Caco-2 (cell line): ENCODE measurements at regions of chr4 and their contacts with region 1.

Region 1: GRCh38 chr4:113761620-113762185 is at the start of gene CAMK2D:
- DNase-seq: peak; percentile 91 to 94
- H3K4me3 ChIP-seq: peak within 1 kb of the TSS; percentile 82
- H3K4me3 Mint-ChIP-seq: peak within 1 kb of the TSS; percentile 96
- H3K27ac Mint-ChIP-seq: peak within 1 kb of the TSS; percentile 91
- H3K4me1 ChIP-seq: peaks cover 37% of the 10 kb centered on the region
- H3K4me1 Mint-ChIP-seq: peaks cover 30% of the 10 kb centered on the region
- H3K27me3 ChIP-seq: no peaks in the 10 kb centered on the region
- H3K27me3 Mint-ChIP-seq: no peaks in the 10 kb centered on the region
- CTCF ChIP-seq: peak; percentile 35 to 82
- total RNA-seq, gene CAMK2D: 56.1 and 65.6 TPM in 2 replicates

Region 2: GRCh38 chr4:113468165-113469022 is 293.3 kb before region 1 on chr4:
- CTCF ChIA-PET with region 1: no interaction called
- POLR2A ChIA-PET with region 1: no interaction called
- intact Hi-C with region 1: loop called (anchors 5 kb)
- DNase-seq: peak; percentile 37 to 51
- H3K4me3 ChIP-seq: no peak overlapping the region
- H3K4me3 Mint-ChIP-seq: no peak overlapping the region
- H3K27ac Mint-ChIP-seq: peak overlapping the region; percentile 66
- H3K4me1 ChIP-seq: peaks cover 38% of the 10 kb centered on the region
- H3K4me1 Mint-ChIP-seq: peaks cover 33% of the 10 kb centered on the region
- H3K27me3 ChIP-seq: no peaks in the 10 kb centered on the region
- H3K27me3 Mint-ChIP-seq: no peaks in the 10 kb centered on the region
- CTCF ChIP-seq: no peak

Region 3: DNA sequence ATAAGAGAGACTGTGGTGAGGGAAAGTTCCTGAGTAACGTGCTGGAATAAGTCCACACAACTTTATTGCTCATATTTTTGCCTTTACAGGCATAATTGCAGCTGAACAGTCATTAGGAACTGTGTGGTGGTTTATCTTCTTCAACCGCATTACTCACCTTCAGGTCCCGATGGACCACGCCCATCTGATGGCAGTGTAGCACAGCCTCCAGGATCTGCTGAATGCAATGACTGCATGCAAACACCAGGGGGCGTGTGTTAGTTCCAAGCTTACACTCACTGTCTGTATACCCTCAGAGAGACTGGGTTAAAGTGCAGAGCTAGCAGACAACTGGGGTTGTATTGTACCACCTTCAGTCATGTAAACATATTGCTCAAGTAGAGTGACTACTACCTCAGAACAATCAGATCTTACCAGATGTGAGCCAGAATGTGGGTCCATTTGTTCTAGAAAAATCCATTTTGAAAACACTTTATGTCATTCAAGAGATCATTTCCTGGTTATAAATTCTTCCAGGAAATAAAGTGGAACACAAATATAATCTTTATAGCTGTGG is 214.1 kb before region 1 on chr4:
- CTCF ChIA-PET with region 1: interaction called, 7 read pairs
- POLR2A ChIA-PET with region 1: no interaction called
- intact Hi-C with region 1: loop called (anchors 1 kb)
- DNase-seq: peak; percentile 92 to 93
- H3K4me3 ChIP-seq: no peak overlapping the region
- H3K4me3 Mint-ChIP-seq: no peak overlapping the region
- H3K27ac Mint-ChIP-seq: no peak overlapping the region
- H3K4me1 ChIP-seq: peaks cover 9% of the 10 kb centered on the region; the same call in 1 of the 2 replicates
- H3K4me1 Mint-ChIP-seq: no peaks in the 10 kb centered on the region
- H3K27me3 ChIP-seq: no peaks in the 10 kb centered on the region
- H3K27me3 Mint-ChIP-seq: no peaks in the 10 kb centered on the region
- CTCF ChIP-seq: peak; percentile 91 to 93

Region 4: DNA sequence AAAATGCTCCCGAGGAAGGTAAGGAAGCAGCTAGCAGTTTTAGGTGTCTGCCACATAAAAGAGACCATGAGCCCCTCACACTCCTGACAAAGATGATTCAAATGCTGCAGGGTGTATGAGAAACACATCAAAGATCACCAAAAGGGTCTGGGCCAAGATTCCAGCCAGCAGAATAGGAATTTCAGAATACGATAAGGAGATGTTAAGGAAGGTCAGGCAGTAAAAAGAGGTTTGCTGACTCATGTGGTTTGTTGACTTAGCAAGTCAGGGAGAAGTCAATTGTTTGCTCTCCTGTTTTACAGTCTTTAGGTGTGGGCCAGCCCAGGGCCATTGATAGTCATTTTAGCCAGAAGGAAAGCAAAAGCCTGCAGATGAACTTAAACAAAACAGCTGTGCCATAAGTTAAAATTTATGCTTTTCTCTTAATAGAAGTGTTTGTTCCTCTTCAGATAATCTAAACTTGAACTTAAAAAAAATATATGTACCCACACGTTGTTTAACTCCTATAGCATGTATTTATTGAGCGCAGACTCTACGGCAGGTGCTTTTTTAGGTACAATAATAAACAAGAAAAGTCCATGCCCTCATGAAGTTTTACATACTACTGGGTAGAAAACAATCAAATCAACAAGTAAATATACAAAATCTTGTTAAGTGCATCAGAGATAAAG is 115.8 kb before region 1 on chr4:
- CTCF ChIA-PET with region 1: no interaction called
- POLR2A ChIA-PET with region 1: interaction called, 3 read pairs
- intact Hi-C with region 1: loop called (anchors 1 kb)
- DNase-seq: peak; percentile 79 to 83
- H3K4me3 ChIP-seq: no peak overlapping the region
- H3K4me3 Mint-ChIP-seq: peak overlapping the region; percentile 54
- H3K27ac Mint-ChIP-seq: peak overlapping the region; percentile 92
- H3K4me1 ChIP-seq: peaks cover 70% of the 10 kb centered on the region
- H3K4me1 Mint-ChIP-seq: peaks cover 49% of the 10 kb centered on the region
- H3K27me3 ChIP-seq: no peaks in the 10 kb centered on the region
- H3K27me3 Mint-ChIP-seq: no peaks in the 10 kb centered on the region
- CTCF ChIP-seq: no peak

Region 5: DNA sequence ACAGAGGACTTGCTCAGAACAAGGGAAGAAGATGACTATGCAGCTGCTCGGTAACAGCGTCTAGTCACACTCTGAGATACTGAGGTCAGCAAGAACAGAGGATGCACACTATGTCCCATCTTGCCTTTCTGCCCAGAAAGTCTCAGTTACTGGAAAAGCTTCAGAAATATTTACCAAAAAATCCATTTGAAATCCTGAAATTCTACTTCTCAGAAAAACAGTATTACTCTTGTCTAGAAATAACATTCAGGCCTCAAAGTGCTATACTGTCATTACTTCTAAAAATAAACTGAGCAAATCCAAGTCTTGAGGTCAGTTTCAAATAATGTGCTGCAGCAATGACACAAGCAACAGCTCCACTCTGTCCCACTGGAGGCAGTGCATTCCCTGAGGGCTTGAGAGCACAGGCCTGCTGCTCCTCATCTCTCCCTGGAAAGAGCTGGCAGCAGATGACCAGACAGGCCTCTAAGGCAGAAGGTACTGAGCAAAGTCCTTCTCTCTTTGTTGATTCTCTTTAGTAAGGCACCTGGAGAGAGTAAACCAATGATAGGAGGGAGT is 77.1 kb before region 1 on chr4:
- CTCF ChIA-PET with region 1: interaction called, 3 read pairs
- POLR2A ChIA-PET with region 1: interaction called, 9 read pairs
- intact Hi-C with region 1: loop called (anchors 1 kb)
- DNase-seq: peak; percentile 76 to 89
- H3K4me3 ChIP-seq: no peak overlapping the region
- H3K4me3 Mint-ChIP-seq: no peak overlapping the region
- H3K27ac Mint-ChIP-seq: no peak overlapping the region
- H3K4me1 ChIP-seq: peaks cover 52% of the 10 kb centered on the region
- H3K4me1 Mint-ChIP-seq: peaks cover 47% of the 10 kb centered on the region
- H3K27me3 ChIP-seq: no peaks in the 10 kb centered on the region
- H3K27me3 Mint-ChIP-seq: no peaks in the 10 kb centered on the region
- CTCF ChIP-seq: peak; percentile 31 to 46

Region 6: DNA sequence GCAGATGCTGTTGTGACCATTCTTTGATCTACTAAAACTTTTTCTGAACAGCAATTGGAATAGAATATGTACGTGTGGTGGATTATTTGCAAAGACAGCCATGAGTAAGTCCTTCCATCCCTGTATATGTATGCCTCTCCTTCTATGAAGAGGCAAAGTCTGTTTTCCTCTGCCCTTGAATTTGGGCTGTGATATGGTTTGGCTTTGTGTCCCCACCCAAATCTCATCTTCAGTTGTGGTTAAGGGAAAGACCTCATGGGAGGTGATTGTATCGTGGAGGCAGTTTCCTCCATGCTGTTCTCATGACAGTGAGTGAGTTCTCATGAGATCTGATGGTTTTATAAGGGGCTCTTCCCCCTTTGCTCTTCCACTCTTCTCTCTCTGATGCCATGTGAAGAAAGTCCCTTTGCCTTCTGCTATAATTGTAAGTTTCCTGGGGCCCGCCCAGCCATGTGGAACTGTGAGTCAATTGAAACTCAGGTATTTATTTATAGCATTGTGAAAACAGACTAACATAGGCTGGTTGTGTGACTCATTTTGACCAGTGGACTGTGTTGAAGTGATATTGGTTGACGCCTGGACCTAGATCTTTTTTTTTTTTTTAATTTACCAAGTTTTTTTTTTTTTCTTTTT is 108.2 kb after region 1 on chr4:
- CTCF ChIA-PET with region 1: no interaction called
- POLR2A ChIA-PET with region 1: no interaction called
- intact Hi-C with region 1: loop called (anchors 5 kb)
- DNase-seq: no peak
- H3K4me3 ChIP-seq: no peak overlapping the region
- H3K4me3 Mint-ChIP-seq: no peak overlapping the region
- H3K27ac Mint-ChIP-seq: no peak overlapping the region
- H3K4me1 ChIP-seq: no peaks in the 10 kb centered on the region
- H3K4me1 Mint-ChIP-seq: no peaks in the 10 kb centered on the region
- H3K27me3 ChIP-seq: no peaks in the 10 kb centered on the region
- H3K27me3 Mint-ChIP-seq: no peaks in the 10 kb centered on the region
- CTCF ChIP-seq: no peak

Region 7: DNA sequence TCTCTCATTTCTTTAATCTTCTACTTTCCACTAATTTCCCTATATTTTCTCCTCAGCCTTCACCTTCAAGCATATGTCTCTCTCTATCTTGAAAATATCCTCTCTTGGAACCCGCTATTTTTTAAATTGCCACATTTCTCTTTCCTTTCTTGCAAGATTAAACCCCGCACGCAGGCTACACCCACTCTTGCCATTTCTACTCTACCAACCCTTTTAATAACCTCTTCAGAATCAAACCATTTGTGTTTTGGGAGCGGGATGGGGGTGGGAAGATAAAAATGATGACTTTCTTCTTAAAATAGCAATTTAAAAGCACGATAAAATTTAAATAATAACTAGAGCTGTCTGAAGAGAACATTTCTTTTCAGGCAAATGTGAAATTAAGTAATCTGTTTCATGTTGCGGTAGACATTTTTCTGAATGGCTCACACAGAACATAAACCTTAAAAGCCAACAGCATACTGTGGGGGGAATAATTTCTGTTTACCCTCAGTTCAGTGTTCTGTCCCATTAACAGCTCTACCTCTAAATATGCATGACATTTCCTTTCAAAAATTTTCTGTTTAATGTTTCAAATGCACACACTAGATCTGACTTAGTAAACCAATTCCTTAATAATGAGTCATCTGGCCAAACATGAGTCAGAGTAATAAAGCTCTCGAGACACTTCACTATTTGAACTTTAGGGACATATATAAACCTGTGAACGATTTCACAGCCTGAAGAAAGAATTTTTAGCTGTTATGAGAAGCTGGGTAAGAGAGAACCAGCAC is 197.2 kb after region 1 on chr4:
- CTCF ChIA-PET with region 1: no interaction called
- POLR2A ChIA-PET with region 1: no interaction called
- intact Hi-C with region 1: loop called (anchors 1 kb)
- DNase-seq: peak in 1 of 2 experiments; percentile 60
- H3K4me3 ChIP-seq: no peak overlapping the region; the same call in 1 of the 2 replicates
- H3K4me3 Mint-ChIP-seq: peak overlapping the region; percentile 39
- H3K27ac Mint-ChIP-seq: peak overlapping the region; percentile 82
- H3K4me1 ChIP-seq: peaks cover 51% of the 10 kb centered on the region
- H3K4me1 Mint-ChIP-seq: peaks cover 58% of the 10 kb centered on the region
- H3K27me3 ChIP-seq: no peaks in the 10 kb centered on the region
- H3K27me3 Mint-ChIP-seq: no peaks in the 10 kb centered on the region
- CTCF ChIP-seq: no peak